ENCODE measurements at regions of chr15 and their contacts with region 1.

Region 1: DNA sequence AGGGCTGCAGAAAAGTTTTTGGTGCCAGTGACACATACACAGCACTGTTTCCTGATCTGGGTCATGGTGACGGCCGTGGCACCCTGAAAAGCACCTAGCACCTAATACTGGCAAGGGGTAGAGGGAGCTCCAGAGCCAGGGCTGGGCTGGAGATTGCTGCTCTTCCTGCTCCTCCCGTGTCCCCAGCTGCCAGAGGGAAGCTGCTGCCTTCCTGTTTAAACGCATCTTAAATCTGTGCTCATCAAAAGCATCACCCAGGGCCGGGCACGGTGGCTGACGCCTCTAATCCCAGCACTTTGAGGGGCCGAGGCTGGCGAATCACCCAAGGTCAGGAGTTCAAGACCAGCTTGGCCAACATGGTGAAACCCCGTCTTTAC is 156.7 kb upstream of the MEF2A start:
- DNase-seq: peak in 6 of 9 donors; percentile 24 to 57 (median 42)
- ATAC-seq: peak; percentile 71
- H3K4me3 ChIP-seq: no peak overlapping the region
- H3K4me3 Mint-ChIP-seq: peak overlapping the region in 3 of 10 donors; percentile 27 to 66 (median 28)
- H3K27ac ChIP-seq: no peak overlapping the region
- H3K27ac Mint-ChIP-seq: peak overlapping the region in 7 of 9 donors; percentile 18 to 91 (median 32)
- H3K4me1 ChIP-seq: peaks cover 0 to 17% of the 10 kb centered on the region in 2 donors
- H3K4me1 Mint-ChIP-seq: peaks cover 0 to 28% (median 22%) of the 10 kb centered on the region in 7 donors
- H3K27me3 ChIP-seq: no peaks in the 10 kb centered on the region
- H3K27me3 Mint-ChIP-seq: peaks cover 0 to 3% (median 0%) of the 10 kb centered on the region in 5 donors

Region 2: GRCh38 chr15:99424978-99425656 is 16.0 kb after region 1 on chr15:
- CTCF ChIA-PET with region 1: interaction called, 6 read pairs
- POLR2A ChIA-PET with region 1: interaction called, 10 read pairs
- intact Hi-C with region 1: no loop called
- DNase-seq: peak in 7 of 9 donors; percentile 33 to 63 (median 39)
- ATAC-seq: peak; percentile 79
- H3K4me3 ChIP-seq: peak overlapping the region; percentile 0
- H3K4me3 Mint-ChIP-seq: peak overlapping the region; percentile 65 to 91 (median 82)
- H3K27ac ChIP-seq: peak overlapping the region; percentile 72
- H3K27ac Mint-ChIP-seq: peak overlapping the region; percentile 89 to 98 (median 97)
- H3K4me1 ChIP-seq: peaks cover 0 to 60% of the 10 kb centered on the region in 2 donors
- H3K4me1 Mint-ChIP-seq: peaks cover 22 to 82% (median 75%) of the 10 kb centered on the region in 7 donors
- H3K27me3 ChIP-seq: no peaks in the 10 kb centered on the region
- H3K27me3 Mint-ChIP-seq: no peaks in the 10 kb centered on the region

Region 3: DNA sequence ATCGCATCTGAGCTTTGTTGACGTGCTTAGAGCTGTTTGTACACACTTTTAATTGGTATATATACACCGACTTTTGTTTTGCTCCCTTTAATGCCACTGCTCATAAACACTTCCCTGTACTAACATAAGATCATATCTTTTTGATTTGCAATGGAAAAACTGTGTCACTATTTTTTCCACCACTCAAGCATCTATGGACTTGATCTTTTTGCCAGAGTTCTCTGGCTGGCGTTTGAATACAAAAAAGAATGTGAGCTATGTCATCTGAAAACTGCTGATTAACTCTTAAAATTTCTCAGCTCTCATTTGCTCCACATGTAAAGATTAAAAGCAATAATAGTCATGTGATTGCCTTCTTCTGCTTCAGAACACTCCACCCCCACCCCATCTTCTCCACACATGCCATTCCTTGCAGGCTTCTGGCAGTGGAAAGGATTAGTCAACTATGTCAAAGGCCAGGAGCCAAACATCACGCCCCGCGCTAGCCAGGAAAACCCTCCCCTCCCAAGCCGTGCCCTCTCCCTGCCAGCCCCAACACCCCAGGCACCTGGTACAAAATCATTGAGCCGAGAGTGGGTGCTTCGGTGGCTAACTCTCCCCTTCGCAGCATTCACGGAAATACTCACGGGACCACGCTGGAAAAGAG is 33.3 kb after region 1 on chr15:
- CTCF ChIA-PET with region 1: interaction called, 6 read pairs
- POLR2A ChIA-PET with region 1: interaction called, 4 read pairs
- intact Hi-C with region 1: loop called in 1 of 2 experiments (anchors 5 kb)
- DNase-seq: peak in 3 of 9 donors; percentile 22 to 44 (median 23)
- ATAC-seq: no peak
- H3K4me3 ChIP-seq: no peak overlapping the region
- H3K4me3 Mint-ChIP-seq: peak overlapping the region in 6 of 10 donors; percentile 8 to 30 (median 20)
- H3K27ac ChIP-seq: no peak overlapping the region
- H3K27ac Mint-ChIP-seq: peak overlapping the region; percentile 30 to 100 (median 90)
- H3K4me1 ChIP-seq: peaks cover 0 to 57% of the 10 kb centered on the region in 2 donors
- H3K4me1 Mint-ChIP-seq: peaks cover 10 to 87% (median 65%) of the 10 kb centered on the region in 7 donors
- H3K27me3 ChIP-seq: no peaks in the 10 kb centered on the region
- H3K27me3 Mint-ChIP-seq: peaks cover 0 to 8% (median 0%) of the 10 kb centered on the region in 5 donors

Region 4: DNA sequence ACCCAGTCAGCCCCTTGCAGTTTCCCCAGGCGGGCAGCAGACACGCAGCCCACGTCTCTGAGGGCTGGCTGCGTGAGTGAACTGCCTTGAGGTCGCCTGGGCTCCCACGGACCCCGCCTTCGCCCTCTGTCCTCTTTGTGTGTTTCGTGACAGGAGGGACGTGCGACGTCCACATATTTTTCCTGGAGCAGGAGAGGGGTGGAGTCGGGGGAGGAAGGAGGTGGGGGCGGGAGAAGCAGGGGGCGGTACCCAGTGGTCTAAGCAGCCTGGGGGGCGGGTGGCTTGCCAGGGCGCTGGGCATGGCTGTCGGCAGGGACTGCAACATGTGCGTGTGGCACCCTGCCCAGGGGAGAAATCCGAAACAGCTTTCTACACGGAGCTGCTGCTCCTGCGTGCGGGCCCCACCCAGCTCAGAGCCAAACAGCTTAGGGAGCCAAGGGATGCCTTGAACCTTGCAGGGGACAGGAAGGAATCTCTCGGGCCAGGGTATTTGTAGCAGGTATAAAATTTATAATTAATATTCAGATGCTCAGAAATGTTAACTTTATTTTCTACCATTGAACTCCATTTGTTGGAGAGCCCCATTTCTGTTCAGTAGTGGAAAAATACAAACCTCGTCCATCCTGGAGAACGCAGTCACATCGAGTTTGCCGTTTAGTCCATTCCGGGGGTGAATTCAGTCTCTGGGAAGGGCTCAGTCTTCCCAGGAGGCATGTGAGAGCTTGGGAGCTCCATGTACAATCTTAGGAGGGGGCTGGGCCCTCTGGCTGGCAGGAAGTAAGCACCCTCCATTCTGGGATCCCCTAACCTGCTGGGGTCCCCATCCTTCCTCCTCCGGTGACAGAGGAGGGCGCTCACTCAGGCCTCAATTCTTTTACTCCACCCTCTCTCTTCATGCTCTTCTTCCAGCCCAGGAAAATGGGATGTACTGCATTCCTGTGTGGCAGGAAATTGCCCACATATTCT is 77.6 kb after region 1 on chr15:
- CTCF ChIA-PET with region 1: no interaction called
- POLR2A ChIA-PET with region 1: interaction called, 6 read pairs
- intact Hi-C with region 1: loop called in 1 of 2 experiments (anchors 5 kb)
- DNase-seq: peak in 1 of 9 donors; percentile 20
- ATAC-seq: peak; percentile 38
- H3K4me3 ChIP-seq: no peak overlapping the region
- H3K4me3 Mint-ChIP-seq: peak overlapping the region; percentile 76 to 92 (median 85)
- H3K27ac ChIP-seq: no peak overlapping the region
- H3K27ac Mint-ChIP-seq: peak overlapping the region in 7 of 9 donors; percentile 63 to 87 (median 76)
- H3K4me1 ChIP-seq: peaks cover 0 to 16% of the 10 kb centered on the region in 2 donors
- H3K4me1 Mint-ChIP-seq: peaks cover 19 to 33% (median 22%) of the 10 kb centered on the region in 7 donors
- H3K27me3 ChIP-seq: peaks cover 0 to 7% of the 10 kb centered on the region in 2 donors
- H3K27me3 Mint-ChIP-seq: peaks cover 0 to 24% (median 5%) of the 10 kb centered on the region in 5 donors

Region 5: GRCh38 chr15:99682455-99682854 is 273.4 kb after region 1 on chr15:
- CTCF ChIA-PET with region 1: interaction called, 3 read pairs
- POLR2A ChIA-PET with region 1: no interaction called
- intact Hi-C with region 1: loop called in 1 of 2 experiments (anchors 5 kb)
- DNase-seq: peak in 3 of 9 donors; percentile 8 to 23 (median 12)
- ATAC-seq: no peak
- H3K4me3 ChIP-seq: no peak overlapping the region
- H3K4me3 Mint-ChIP-seq: peak overlapping the region in 5 of 10 donors; percentile 2 to 62 (median 21)
- H3K27ac ChIP-seq: peak overlapping the region; percentile 57
- H3K27ac Mint-ChIP-seq: peak overlapping the region in 8 of 9 donors; percentile 64 to 94 (median 79)
- H3K4me1 ChIP-seq: peaks cover 0 to 21% of the 10 kb centered on the region in 2 donors
- H3K4me1 Mint-ChIP-seq: peaks cover 19 to 58% (median 47%) of the 10 kb centered on the region in 7 donors
- H3K27me3 ChIP-seq: no peaks in the 10 kb centered on the region
- H3K27me3 Mint-ChIP-seq: no peaks in the 10 kb centered on the region